Activated CD4-positive, alpha-beta T cell treated with anti-CD3 and anti-CD28 coated beads, Interleukin-2, amount 10 ng/mL, durations not matched to agents 24 days and 14 days (primary cell): ENCODE measurements at regions of chr12 and their contacts with region 1.

Region 1: GRCh38 chr12:106136263-106136662 is 2.5 kb downstream of the NUAK1 start:
- DNase-seq: peak; percentile 91
- H3K4me3 Mint-ChIP-seq: no peak overlapping the region
- H3K27ac Mint-ChIP-seq: no peak overlapping the region
- H3K4me1 Mint-ChIP-seq: peaks cover 5% of the 10 kb centered on the region
- H3K27me3 Mint-ChIP-seq: peaks cover 53% of the 10 kb centered on the region

Region 2: GRCh38 chr12:105420659-105421240 is 715.5 kb before region 1 on chr12:
- intact Hi-C with region 1: loop called (anchors 1 kb)
- DNase-seq: peak; percentile 88
- H3K4me3 Mint-ChIP-seq: no peak overlapping the region
- H3K27ac Mint-ChIP-seq: no peak overlapping the region
- H3K4me1 Mint-ChIP-seq: no peaks in the 10 kb centered on the region
- H3K27me3 Mint-ChIP-seq: peaks cover 8% of the 10 kb centered on the region

Region 3: DNA sequence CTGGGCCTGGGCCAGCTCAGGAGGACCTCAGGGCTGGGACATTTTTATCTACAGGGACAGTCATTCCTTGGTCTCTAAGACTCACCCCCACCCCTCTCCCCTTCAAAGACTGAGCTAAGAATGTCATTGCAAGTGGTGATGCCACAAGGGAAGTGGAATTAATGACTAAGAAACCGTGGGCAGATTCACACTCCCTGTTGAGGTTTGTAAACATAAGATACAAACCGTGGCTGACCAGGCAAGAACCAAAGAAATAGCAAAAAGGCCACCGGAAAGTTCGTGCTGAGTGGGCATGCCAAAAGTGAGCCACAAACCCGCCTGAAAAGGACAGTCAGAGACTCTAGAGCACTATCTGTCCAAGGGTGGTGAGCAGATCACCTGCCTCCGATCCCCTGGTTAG is 23.2 kb before region 1 on chr12:
- intact Hi-C with region 1: no loop called
- DNase-seq: peak; percentile 57
- H3K4me3 Mint-ChIP-seq: no peak overlapping the region
- H3K27ac Mint-ChIP-seq: peak overlapping the region; percentile 48
- H3K4me1 Mint-ChIP-seq: peaks cover 6% of the 10 kb centered on the region
- H3K27me3 Mint-ChIP-seq: peaks cover 13% of the 10 kb centered on the region

Region 4: DNA sequence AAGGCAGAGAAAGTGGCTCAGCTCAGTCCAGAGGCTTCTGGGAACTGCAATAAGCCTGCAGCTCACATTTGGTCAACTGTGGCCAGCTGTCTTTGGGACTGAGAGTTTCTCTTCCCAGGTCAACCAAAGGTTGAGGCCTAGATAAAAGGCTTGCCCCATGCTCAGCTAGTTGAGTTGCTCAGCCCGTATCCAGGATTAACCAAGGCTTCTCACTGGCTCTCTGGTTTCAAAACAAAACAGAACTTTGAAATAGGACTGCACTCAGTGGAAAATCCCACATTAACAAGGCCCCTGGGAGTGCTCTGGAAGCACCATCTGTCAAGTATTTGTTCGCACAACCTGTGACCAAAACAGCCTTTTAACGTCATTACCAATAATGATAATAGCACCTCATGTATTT is 42.8 kb after region 1 on chr12:
- intact Hi-C with region 1: no loop called
- DNase-seq: no peak
- H3K4me3 Mint-ChIP-seq: no peak overlapping the region
- H3K27ac Mint-ChIP-seq: no peak overlapping the region
- H3K4me1 Mint-ChIP-seq: no peaks in the 10 kb centered on the region
- H3K27me3 Mint-ChIP-seq: peaks cover 3% of the 10 kb centered on the region

Region 5: GRCh38 chr12:106195621-106196027 is 59.4 kb after region 1 on chr12:
- intact Hi-C with region 1: no loop called
- DNase-seq: no peak
- H3K4me3 Mint-ChIP-seq: no peak overlapping the region
- H3K27ac Mint-ChIP-seq: no peak overlapping the region
- H3K4me1 Mint-ChIP-seq: no peaks in the 10 kb centered on the region
- H3K27me3 Mint-ChIP-seq: peaks cover 1% of the 10 kb centered on the region

Region 6: DNA sequence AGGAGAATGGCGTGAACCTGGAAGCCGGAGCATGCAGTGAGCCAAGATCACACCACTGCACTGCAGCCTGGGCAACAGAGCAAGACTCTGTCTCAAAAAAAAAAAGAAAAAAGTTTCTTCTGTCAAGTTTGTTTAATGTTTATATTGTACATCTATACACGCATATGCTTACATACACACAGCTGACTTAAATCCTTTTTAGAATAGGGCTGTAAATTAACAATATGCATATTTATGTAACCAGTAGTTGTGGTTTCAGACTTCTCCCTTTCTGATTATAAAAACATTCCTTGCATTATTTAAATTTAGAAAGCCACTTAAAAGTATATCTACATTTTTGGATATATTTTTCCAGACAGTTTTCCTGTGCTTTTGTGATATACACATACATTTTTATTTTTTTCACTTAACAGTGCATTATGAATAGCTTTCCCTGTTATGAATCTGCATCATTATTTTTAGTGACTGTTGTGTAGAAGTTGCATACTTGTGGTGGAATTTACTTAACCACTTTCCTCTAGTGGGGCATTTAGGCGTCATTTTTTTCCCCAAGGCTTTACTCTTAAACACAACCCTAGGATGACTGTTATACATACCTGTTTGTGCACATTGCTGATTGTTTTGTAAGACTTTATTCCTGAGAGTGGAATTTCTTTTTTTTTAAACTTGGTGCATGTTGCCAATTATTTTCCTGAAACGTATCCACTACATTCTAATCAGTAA is 250.7 kb after region 1 on chr12:
- intact Hi-C with region 1: no loop called
- DNase-seq: no peak
- H3K4me3 Mint-ChIP-seq: no peak overlapping the region
- H3K27ac Mint-ChIP-seq: no peak overlapping the region
- H3K4me1 Mint-ChIP-seq: peaks cover 7% of the 10 kb centered on the region
- H3K27me3 Mint-ChIP-seq: no peaks in the 10 kb centered on the region